ENCODE measurements at regions of chr22 and their contacts with region 1.

Region 1: DNA sequence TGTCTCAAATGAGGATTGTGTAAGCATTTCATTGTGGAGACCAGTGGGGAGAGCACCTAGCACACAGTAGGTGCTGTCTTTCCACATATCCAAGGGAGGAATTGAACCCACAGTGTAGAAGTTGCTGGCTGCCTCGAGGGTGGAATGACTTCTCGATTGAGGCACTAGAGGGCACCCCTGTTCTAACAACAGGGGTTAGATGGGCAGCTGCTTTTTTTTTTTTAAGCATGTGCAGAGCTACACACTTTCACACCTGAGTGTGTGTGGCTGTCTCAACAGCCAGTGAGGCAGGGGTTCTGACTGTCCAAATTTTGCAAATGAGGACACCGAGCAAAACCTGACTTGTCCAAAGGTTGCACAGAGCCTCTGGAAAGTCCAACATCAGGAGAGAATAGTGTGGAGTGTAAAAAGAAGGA is 118.2 kb upstream of the CRYBB3 start:
- DNase-seq: no peak
- ATAC-seq: peak in 3 of 4 donors; percentile 11 to 41 (median 37)
- H3K4me3 ChIP-seq: no peak overlapping the region
- H3K27ac ChIP-seq: no peak overlapping the region
- H3K4me1 ChIP-seq: peaks cover 0 to 41% (median 11%) of the 10 kb centered on the region in 12 donors
- H3K27me3 ChIP-seq: no peaks in the 10 kb centered on the region
- CTCF ChIP-seq: peak; percentile 29 to 62 (median 52)
- POLR2A ChIP-seq: no peak

Region 2: GRCh38 chr22:25172153-25172552 is 90.7 kb after region 1 on chr22:
- intact Hi-C with region 1: loop called in 7 of 10 experiments (anchors 1 to 10 kb)
- DNase-seq: peak in 1 of 5 donors; percentile 55
- ATAC-seq: peak; percentile 71 to 77 (median 74)
- H3K4me3 ChIP-seq: no peak overlapping the region
- H3K27ac ChIP-seq: no peak overlapping the region
- H3K4me1 ChIP-seq: no peaks in the 10 kb centered on the region
- H3K27me3 ChIP-seq: no peaks in the 10 kb centered on the region
- CTCF ChIP-seq: peak; percentile 21 to 65 (median 52)
- POLR2A ChIP-seq: no peak

Measured in heart left ventricle (tissue), 16 donors.